Activated CD8-positive, alpha-beta T cell treated with anti-CD3 and anti-CD28 coated beads, Interleukin-2, amount 10 ng/mL, durations not matched to agents 7 days and 5 days (primary cell): ENCODE measurements at regions of chr16 and their contacts with region 1.

Region 1: DNA sequence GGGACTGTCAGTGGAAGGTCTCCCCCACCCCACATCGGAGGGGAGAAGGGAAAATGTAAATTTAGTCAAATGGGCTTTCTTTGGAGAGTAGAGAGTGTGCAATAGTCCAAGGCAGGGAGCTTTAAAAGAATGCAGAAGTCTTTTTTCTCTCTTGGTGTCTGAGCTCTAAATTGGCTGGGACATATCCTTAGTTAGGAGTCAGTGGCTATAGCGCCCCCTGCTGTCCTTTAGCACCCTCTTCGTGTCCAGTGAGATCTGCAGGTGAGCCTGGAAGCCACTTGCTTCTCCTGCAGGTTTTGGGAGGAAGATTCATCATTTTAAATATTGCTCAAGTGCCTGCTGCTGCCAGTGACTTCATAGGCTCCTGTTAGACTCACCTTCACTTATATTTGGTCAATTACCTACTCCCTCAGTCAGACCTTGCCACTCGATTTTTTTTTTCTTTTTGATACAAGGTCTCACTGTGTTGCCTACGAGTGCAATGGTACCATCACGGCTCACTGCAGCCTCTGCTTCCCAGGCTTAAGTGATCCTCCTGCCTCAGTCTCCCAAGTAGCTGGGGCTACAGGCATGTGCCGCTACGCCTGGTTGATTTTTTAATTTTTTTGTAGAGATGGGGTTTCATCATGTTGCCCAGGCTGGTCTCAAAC is 174.8 kb downstream of the PRKCB start:
- DNase-seq: peak; percentile 89
- ATAC-seq: peak; percentile 68
- H3K4me3 Mint-ChIP-seq: no peak overlapping the region
- H3K27ac Mint-ChIP-seq: no peak overlapping the region
- H3K4me1 Mint-ChIP-seq: peaks cover 57% of the 10 kb centered on the region
- H3K27me3 Mint-ChIP-seq: no peaks in the 10 kb centered on the region

Region 2: DNA sequence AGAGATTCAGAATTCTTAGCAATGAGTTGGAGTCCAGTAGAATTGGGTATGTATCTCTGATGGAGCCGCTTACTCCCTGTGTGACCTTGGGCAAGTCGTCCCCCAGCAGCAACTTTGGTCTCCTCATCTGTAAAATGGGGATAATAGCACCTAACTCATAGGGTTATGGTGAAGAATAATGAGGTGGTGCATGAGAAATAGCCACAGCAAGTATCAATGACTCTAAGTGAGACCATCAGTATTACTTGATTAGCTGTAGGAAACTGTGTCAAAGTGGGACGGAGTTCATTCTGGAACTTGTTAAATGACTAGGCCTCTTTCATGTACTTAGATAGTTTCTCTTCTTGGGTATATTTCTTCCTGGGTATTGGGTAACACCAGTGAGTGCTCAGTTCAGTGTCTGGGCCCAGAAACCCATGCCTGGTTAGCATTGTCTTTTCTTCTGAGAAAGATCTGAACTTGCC is 168.4 kb before region 1 on chr16:
- CTCF ChIA-PET with region 1: interaction called, 14 read pairs
- POLR2A ChIA-PET with region 1: no interaction called
- DNase-seq: peak; percentile 51
- ATAC-seq: peak; percentile 71
- H3K4me3 Mint-ChIP-seq: peak overlapping the region; percentile 23
- H3K27ac Mint-ChIP-seq: peak overlapping the region; percentile 71
- H3K4me1 Mint-ChIP-seq: peaks cover 77% of the 10 kb centered on the region
- H3K27me3 Mint-ChIP-seq: no peaks in the 10 kb centered on the region

Region 3: DNA sequence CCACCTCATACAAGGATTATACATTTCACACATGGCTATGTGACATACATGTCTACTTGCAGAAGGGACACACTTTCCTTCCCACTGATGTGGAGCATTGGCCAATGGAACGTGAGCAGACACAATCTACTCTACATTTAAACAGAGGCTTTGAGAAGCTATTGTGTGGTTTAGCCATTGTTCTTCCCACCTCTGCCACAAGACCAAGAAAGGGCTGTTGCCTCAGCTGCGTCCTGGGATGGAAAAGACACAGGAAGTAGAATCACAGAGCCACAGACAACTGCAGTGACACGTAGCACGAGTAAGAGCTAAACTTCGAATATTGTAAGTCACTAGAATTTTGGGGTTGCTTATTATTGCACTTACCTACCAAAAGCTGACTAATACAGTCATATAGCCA is 141.5 kb before region 1 on chr16:
- CTCF ChIA-PET with region 1: interaction called, 10 read pairs
- POLR2A ChIA-PET with region 1: no interaction called
- DNase-seq: peak; percentile 65
- ATAC-seq: peak; percentile 80
- H3K4me3 Mint-ChIP-seq: peak overlapping the region; percentile 2
- H3K27ac Mint-ChIP-seq: peak overlapping the region; percentile 66
- H3K4me1 Mint-ChIP-seq: peaks cover 81% of the 10 kb centered on the region
- H3K27me3 Mint-ChIP-seq: no peaks in the 10 kb centered on the region

Region 4: DNA sequence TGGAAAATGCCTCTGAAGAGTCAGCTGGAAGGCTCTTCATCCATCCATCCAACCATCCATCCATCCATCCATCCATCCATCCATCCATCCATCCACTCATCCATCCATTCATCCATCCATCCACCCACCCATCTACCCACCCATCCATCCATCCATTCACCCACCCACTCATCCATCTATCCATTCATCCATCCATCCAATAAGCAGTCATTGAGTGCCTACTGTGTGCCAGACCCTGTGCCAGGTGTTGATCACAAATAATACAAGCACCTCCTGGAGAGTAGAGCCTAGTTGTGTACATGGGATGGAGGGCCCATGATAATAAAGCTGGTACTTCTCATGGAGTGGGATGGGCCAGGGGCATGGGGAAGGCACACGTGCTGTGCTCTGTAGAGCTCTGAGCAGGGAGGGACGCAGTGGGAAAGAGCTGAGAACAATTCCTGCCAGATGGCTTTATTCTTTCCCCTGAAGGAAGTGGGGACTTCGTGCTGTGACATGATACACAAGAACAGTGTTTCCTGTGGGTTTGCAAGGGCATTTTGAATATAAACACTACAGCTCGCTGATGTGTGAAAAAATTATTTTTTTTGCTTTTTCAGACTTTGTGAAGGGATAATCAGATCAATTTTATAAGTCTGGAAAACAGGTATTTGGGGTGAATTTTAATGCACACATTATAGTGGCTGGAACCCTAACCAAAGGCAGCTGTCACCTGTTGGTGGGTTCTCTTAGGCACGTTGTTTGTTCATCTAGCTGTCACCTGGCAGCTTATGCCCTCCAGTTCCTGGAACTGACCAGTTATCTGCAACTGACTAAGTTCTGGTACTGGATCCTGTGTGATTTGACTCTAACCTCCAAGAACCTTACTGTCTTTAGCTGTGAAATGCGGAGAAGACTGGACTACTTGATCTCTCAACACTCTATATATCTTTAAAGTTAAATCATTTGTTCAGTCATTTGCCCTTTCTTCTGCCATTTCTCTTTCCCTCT is 113.4 kb before region 1 on chr16:
- CTCF ChIA-PET with region 1: interaction called, 13 read pairs
- POLR2A ChIA-PET with region 1: no interaction called
- DNase-seq: no peak
- ATAC-seq: peak; percentile 57
- H3K4me3 Mint-ChIP-seq: peak overlapping the region; percentile 20
- H3K27ac Mint-ChIP-seq: peak overlapping the region; percentile 78
- H3K4me1 Mint-ChIP-seq: peaks cover 48% of the 10 kb centered on the region
- H3K27me3 Mint-ChIP-seq: no peaks in the 10 kb centered on the region

Region 5: DNA sequence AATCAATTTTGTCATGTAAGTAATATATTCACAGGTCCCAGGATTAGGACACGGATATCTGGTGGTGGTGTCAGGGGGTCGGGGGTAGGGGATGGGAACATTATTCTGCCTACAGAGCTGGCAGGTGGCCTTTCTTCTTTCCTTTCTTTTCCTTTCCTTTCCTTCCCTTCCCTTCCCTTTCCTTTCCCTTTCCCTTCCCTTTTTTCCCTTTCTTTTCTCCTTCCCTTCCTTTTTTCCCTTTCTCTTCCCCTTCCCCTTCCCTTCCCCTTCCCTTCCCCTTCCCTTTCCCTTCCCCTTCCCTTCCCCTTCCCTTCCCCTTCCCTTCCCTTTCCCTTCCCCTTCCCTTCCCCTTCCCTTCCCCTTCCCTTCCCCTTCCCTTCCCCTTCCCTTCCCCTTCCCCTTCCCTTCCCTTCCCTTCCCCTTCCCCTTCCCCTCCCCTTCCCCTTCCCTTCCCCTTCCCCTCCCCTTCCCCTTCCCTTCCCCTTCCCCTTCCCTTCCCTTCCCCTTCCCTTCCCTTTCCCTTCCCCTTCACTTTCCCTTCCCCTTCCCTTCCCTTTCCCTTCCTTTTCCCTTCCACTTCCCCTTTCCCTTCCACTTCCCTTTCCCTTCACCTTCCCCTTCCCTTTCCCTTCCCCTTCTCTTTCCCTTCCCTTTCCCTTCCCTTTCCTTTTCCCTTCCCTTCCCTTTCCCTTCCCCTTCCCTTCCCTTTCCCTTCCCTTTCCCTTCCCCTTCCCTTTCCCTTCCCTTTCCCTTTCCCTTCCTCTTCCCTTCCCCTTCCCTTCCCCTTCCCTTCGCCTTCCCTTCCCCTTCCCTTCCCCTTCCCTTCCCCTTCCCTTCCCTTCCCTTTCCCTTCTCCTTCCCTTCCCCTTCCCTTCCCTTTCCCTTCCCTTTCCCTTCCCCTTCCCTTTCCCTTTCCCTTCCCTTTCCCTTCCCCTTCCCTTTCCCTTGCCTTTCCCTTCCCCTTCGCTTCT is 28.9 kb before region 1 on chr16:
- CTCF ChIA-PET with region 1: interaction called, 10 read pairs
- POLR2A ChIA-PET with region 1: no interaction called
- DNase-seq: no peak
- ATAC-seq: no peak
- H3K4me3 Mint-ChIP-seq: no peak overlapping the region
- H3K27ac Mint-ChIP-seq: no peak overlapping the region
- H3K4me1 Mint-ChIP-seq: peaks cover 6% of the 10 kb centered on the region
- H3K27me3 Mint-ChIP-seq: no peaks in the 10 kb centered on the region

Region 6: GRCh38 chr16:24102209-24102660 is 91.7 kb after region 1 on chr16:
- CTCF ChIA-PET with region 1: no interaction called
- POLR2A ChIA-PET with region 1: no interaction called
- DNase-seq: no peak
- ATAC-seq: no peak
- H3K4me3 Mint-ChIP-seq: no peak overlapping the region
- H3K27ac Mint-ChIP-seq: no peak overlapping the region
- H3K4me1 Mint-ChIP-seq: no peaks in the 10 kb centered on the region
- H3K27me3 Mint-ChIP-seq: no peaks in the 10 kb centered on the region